ENCODE measurements at regions of chr12 and their contacts with region 1.

Region 1: GRCh38 chr12:14873440-14874185 is 12.0 kb downstream of the MGP start:
- DNase-seq: no peak
- ATAC-seq: no peak
- H3K4me3 ChIP-seq: no peak overlapping the region
- H3K4me3 Mint-ChIP-seq: no peak overlapping the region
- H3K27ac ChIP-seq: no peak overlapping the region
- H3K27ac Mint-ChIP-seq: no peak overlapping the region
- H3K4me1 ChIP-seq: no peaks in the 10 kb centered on the region
- H3K4me1 Mint-ChIP-seq: no peaks in the 10 kb centered on the region
- H3K27me3 ChIP-seq: peaks cover 0 to 13% of the 10 kb centered on the region in 2 experiments
- H3K27me3 Mint-ChIP-seq: no peaks in the 10 kb centered on the region

Region 2: GRCh38 chr12:14937689-14938088 is 64.1 kb after region 1 on chr12:
- CTCF ChIA-PET with region 1: no interaction called
- POLR2A ChIA-PET with region 1: interaction called in 1 of 2 experiments, 11 read pairs
- DNase-seq: peak in 3 of 35 experiments; percentile 35 to 59 (median 37)
- ATAC-seq: peak in 3 of 4 experiments; percentile 25 to 41 (median 39)
- H3K4me3 ChIP-seq: no peak overlapping the region
- H3K4me3 Mint-ChIP-seq: peak overlapping the region in 1 of 3 donors; percentile 22
- H3K27ac ChIP-seq: peak overlapping the region; percentile 46
- H3K27ac Mint-ChIP-seq: peak overlapping the region; percentile 93 to 94
- H3K4me1 ChIP-seq: peaks cover 0 to 14% of the 10 kb centered on the region in 2 experiments
- H3K4me1 Mint-ChIP-seq: peaks cover 60 to 66% (median 63%) of the 10 kb centered on the region in 3 donors
- H3K27me3 ChIP-seq: no peaks in the 10 kb centered on the region
- H3K27me3 Mint-ChIP-seq: no peaks in the 10 kb centered on the region